A673 (cell line): ENCODE measurements at regions of chr6 and their contacts with region 1.

Region 1: GRCh38 chr6:34281702-34282334 is 33.0 kb upstream of the SMIM29 start:
- DNase-seq: no peak
- H3K4me3 ChIP-seq: no peak overlapping the region
- H3K27ac ChIP-seq: no peak overlapping the region
- H3K4me1 ChIP-seq: no peaks in the 10 kb centered on the region
- H3K27me3 ChIP-seq: no peaks in the 10 kb centered on the region
- CTCF ChIP-seq: no peak

Region 2: DNA sequence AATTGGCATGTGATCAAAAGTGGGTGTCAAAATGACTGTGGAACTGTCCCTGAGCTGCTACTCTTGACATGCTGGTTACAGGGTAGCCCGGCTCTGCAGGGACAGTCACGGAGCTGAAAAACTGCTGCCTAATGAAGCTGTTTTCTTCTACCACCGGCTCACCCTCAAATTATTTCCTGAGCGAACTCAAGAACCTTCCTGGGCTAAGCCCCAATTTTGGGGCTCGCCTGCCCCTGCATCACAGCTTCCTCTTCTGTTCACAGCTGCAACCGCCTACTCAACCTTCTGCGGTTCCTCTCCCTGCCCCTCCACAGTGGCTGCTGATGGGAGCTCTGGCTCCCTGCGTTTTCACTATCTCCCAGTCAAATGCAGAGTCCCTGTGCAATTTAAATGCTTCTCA is 367.2 kb before region 1 on chr6:
- CTCF ChIA-PET with region 1: no interaction called
- POLR2A ChIA-PET with region 1: no interaction called
- intact Hi-C with region 1: no loop called
- DNase-seq: peak; percentile 10
- H3K4me3 ChIP-seq: no peak overlapping the region
- H3K27ac ChIP-seq: no peak overlapping the region
- H3K4me1 ChIP-seq: peaks cover 15% of the 10 kb centered on the region
- H3K27me3 ChIP-seq: no peaks in the 10 kb centered on the region
- CTCF ChIP-seq: no peak

Region 3: DNA sequence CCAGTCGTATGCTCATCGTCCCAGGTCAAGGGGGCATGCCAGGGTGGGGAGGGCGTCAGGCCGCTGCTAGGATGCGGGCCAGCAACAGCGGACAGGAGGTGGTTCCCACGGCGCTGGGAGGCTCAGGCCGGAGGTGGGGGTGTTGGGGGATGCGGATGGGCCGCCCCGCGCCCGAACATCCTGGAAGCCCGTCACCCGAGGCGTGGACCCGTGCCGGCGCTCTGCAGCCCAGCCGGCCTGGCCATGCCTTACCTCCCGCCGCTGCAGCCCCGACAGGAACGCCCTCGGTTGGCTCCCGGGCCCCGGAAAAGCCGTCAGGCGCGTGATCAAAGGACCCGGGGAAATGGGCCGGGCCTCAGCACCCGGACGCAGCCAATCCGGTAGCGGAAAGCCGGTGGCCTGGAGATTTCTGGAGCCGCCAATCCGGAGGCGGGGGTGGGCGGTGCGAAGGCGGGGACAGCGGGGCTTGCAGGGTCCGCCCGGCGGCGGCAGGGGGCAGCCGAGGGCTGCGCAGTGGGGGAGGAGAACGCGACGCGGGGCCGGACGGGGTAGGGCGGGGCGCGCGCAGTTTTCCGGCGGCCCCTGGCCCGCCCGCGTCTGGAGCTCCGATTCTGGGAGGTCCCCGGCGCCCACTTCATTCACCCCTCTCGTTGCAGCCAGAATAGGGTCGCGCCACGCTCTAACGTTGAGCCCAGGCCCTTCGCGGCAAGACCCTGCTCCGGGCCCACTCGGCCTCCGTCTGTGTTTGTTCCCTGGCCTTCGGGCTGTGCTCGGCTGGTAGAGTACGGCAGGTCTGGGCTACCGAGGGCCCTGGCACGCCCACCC is 32.9 kb before region 1 on chr6 and contains the start of gene SMIM29:
- CTCF ChIA-PET with region 1: interaction called, 13 read pairs
- POLR2A ChIA-PET with region 1: no interaction called
- intact Hi-C with region 1: no loop called
- DNase-seq: peak; percentile 96
- H3K4me3 ChIP-seq: peak within 1 kb of the TSS; percentile 81
- H3K27ac ChIP-seq: peak within 1 kb of the TSS; percentile 72
- H3K4me1 ChIP-seq: peaks cover 19% of the 10 kb centered on the region
- H3K27me3 ChIP-seq: no peaks in the 10 kb centered on the region
- CTCF ChIP-seq: peak; percentile 89
- total RNA-seq, gene SMIM29: 19.1 and 24.0 TPM in 2 replicates